ENCODE measurements at regions of chrX and their contacts with region 1.

Region 1: DNA sequence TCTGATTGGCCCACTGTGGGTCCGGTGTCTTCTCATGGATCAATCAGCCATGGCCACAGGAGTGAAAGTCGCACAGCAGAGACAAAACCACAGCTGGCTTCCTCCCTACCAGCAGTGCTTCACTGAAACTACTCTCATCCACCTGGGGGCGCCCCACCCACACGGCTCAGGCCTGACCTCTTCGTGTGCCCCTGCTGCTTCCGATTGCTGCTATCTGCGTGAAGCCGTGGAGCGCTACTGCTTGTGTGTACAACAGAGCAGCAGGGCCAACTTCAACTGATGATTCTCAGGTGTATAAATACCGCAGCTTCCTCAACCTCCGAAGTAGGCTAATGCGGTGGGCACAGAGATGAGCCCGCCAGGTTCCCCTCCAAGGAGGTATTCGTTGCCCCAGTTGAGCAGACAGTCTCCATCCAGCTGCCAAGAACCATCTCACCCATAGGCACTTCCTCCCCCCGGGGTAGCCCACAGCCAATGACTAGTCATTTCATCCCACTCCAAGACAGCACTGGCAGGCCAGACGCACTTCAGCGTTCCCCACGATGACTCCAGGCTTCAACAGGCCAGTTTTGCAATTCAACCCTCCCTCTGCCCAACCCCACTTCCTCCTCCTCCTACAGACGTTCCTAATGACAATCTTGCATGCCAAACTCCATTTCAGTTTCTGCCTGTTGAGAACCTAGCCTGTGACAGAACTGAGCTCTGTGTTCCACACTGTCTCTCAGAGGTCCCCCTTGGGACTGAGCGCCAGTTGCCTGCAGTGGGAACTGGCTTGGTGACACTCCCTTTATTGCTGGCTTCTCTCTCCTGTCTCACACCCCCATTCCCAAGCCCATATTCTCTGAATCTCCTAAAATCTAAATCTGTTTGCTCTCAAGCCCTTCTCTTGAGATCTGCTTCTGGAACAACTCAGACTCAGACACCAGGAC is 41.3 kb upstream of the ATP6AP2 start:
- DNase-seq: peak; percentile 27
- H3K4me3 Mint-ChIP-seq: no peak overlapping the region
- H3K27ac Mint-ChIP-seq: no peak overlapping the region
- H3K4me1 Mint-ChIP-seq: peaks cover 7% of the 10 kb centered on the region
- H3K27me3 Mint-ChIP-seq: peaks cover 86% of the 10 kb centered on the region
- CTCF ChIP-seq: no peak

Region 2: GRCh38 chrX:40552768-40553167 is 13.3 kb after region 1 on chrX:
- CTCF ChIA-PET with region 1: interaction called, 21 read pairs
- POLR2A ChIA-PET with region 1: no interaction called
- intact Hi-C with region 1: no loop called
- DNase-seq: peak; percentile 13
- H3K4me3 Mint-ChIP-seq: no peak overlapping the region
- H3K27ac Mint-ChIP-seq: no peak overlapping the region
- H3K4me1 Mint-ChIP-seq: peaks cover 5% of the 10 kb centered on the region
- H3K27me3 Mint-ChIP-seq: peaks cover 97% of the 10 kb centered on the region
- CTCF ChIP-seq: peak; percentile 17

Region 3: GRCh38 chrX:40580537-40581335 is 41.3 kb after region 1 on chrX and contains the start of gene ATP6AP2:
- CTCF ChIA-PET with region 1: interaction called, 5 read pairs
- POLR2A ChIA-PET with region 1: interaction called, 11 read pairs
- intact Hi-C with region 1: loop called (anchors 2 kb)
- DNase-seq: peak; percentile 92
- H3K4me3 Mint-ChIP-seq: peak within 1 kb of the TSS; percentile 91
- H3K27ac Mint-ChIP-seq: peak within 1 kb of the TSS; percentile 95
- H3K4me1 Mint-ChIP-seq: peaks cover 14% of the 10 kb centered on the region
- H3K27me3 Mint-ChIP-seq: peaks cover 49% of the 10 kb centered on the region
- CTCF ChIP-seq: no peak
- total RNA-seq, gene ATP6AP2: 69.4 and 84.7 TPM in 2 replicates

Measured in MCF 10A (cell line).